ENCODE measurements at regions of chr10 and their contacts with region 1.

Region 1: DNA sequence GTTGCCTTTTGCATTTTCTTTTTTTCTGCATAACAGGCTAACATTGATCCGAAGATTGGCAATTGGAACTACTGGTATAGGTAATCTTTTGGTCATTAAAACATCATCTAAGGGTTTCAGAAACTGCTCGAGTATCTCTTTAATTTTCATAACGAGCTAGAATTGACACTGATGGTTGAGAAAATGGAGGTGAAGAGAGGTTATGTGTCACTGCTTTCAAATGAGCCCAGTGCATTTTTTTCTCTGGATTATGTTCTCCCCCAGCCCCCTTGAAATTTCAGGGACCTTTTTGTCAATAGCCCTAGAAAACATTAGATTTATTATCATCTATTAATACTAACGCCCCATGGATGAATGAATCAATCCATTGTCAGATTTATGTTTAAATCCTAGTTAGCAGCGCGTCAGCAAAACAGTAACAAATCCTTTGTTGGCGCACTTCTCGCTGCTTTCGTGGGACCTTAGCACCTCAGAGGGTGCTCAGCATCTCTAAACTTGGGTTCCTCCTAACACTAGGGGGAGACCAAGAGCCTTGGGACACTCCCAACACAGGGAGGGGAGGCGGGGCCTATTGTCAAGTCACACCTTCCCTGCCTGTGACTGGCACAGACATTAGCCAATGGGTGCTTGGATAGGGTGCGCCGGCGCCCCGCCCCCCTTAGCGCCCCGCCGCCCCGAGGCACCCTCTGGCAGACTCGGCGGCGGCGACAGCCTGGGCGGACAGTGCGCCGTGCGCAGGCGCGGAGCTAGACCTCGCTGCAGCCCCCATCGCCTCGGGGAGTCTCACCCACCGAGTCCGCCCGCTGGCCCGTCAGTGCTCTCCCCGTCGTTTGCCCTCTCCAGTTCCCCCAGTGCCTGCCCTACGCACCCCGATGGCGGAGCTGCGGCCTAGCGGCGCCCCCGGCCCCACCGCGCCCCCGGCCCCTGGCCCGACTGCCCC is at the start of gene SUFU:
- DNase-seq: peak; percentile 97 to 100 (median 98)

Region 2: GRCh38 chr10:101759309-101760247 is 744.0 kb before region 1 on chr10:
- intact Hi-C with region 1: no loop called
- DNase-seq: peak in 1 of 10 donors; percentile 57

Region 3: GRCh38 chr10:102583435-102584417 is 80.2 kb after region 1 on chr10:
- intact Hi-C with region 1: loop called (anchors 1 kb)
- DNase-seq: peak; percentile 81 to 98 (median 90)

Region 4: GRCh38 chr10:102641880-102642735 is 138.6 kb after region 1 on chr10:
- intact Hi-C with region 1: loop called (anchors 5 kb)
- DNase-seq: peak; percentile 96 to 100 (median 98)

Region 5: GRCh38 chr10:102652170-102652916 is 148.8 kb after region 1 on chr10:
- intact Hi-C with region 1: no loop called
- DNase-seq: peak in 3 of 10 donors; percentile 16 to 47 (median 46)

Measured in posterior cingulate gyrus (tissue), 11 donors.